Panc1 (cell line): ENCODE measurements at regions of chr15 and their contacts with region 1.

Region 1: GRCh38 chr15:67196672-67197363 is 57.6 kb downstream of the AAGAB start:
- DNase-seq: no peak
- ATAC-seq: peak; percentile 69
- H3K4me3 ChIP-seq: no peak overlapping the region
- H3K27ac ChIP-seq: peak overlapping the region; percentile 80
- H3K4me1 ChIP-seq: peaks cover 70% of the 10 kb centered on the region
- H3K27me3 ChIP-seq: no peaks in the 10 kb centered on the region
- CTCF ChIP-seq: no peak

Region 2: GRCh38 chr15:67134067-67134838 is 62.6 kb before region 1 on chr15:
- CTCF ChIA-PET with region 1: no interaction called
- POLR2A ChIA-PET with region 1: no interaction called
- in situ Hi-C with region 1: no loop called
- intact Hi-C with region 1: no loop called
- DNase-seq: no peak
- ATAC-seq: peak; percentile 37
- H3K4me3 ChIP-seq: peak overlapping the region in 1 of 2 experiments; percentile 14; a peak in 1 of 4 replicates
- H3K27ac ChIP-seq: peak overlapping the region; percentile 100
- H3K4me1 ChIP-seq: peaks cover 99% of the 10 kb centered on the region
- H3K27me3 ChIP-seq: no peaks in the 10 kb centered on the region
- CTCF ChIP-seq: no peak

Region 3: DNA sequence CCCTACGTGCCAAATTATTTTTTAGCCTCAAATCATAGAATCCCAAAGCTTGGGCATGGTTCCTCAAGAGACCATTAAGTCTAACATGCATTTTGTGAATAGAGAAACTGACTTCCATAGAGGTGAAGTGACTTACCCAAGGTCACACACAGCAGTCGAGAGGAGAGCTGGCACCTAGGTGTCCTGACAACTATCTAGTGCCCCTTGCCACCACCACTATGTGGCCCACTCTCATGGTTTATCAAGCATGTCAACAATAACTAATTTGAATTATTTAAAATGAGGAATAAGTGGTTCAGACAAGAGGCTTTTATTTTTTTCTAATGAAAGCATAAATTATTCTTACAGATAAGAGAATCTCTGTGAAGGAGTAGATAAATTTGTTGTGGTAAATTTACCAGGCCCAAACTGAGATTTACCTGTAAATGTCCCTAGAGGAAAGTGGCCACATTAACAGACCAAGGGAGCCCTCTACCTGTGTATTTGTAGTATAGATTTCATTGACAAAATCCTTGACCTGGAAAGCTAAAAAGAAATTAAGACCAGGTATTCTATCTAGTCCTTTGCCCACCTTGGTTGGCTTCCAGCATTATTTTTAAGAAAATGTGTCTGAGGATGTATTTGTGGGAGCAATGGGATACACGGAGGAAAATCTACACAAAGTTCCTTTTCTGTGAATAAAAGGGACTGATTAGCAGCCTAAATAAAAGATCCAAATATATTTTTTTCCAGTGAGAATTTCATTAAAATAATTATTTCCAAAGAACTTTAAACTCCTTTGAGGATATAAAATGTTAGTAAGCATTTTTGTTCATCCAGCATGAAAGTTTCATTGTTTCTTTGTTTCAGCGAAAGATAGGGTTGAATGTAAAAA is 106.9 kb after region 1 on chr15:
- CTCF ChIA-PET with region 1: no interaction called
- POLR2A ChIA-PET with region 1: no interaction called
- in situ Hi-C with region 1: no loop called
- intact Hi-C with region 1: loop called (anchors 10 kb)
- DNase-seq: peak; percentile 10
- ATAC-seq: peak; percentile 93
- H3K4me3 ChIP-seq: no peak overlapping the region
- H3K27ac ChIP-seq: peak overlapping the region; percentile 60; the same call in 1 of the 2 replicates
- H3K4me1 ChIP-seq: peaks cover 15% of the 10 kb centered on the region
- H3K27me3 ChIP-seq: no peaks in the 10 kb centered on the region
- CTCF ChIP-seq: peak; percentile 69

Region 4: DNA sequence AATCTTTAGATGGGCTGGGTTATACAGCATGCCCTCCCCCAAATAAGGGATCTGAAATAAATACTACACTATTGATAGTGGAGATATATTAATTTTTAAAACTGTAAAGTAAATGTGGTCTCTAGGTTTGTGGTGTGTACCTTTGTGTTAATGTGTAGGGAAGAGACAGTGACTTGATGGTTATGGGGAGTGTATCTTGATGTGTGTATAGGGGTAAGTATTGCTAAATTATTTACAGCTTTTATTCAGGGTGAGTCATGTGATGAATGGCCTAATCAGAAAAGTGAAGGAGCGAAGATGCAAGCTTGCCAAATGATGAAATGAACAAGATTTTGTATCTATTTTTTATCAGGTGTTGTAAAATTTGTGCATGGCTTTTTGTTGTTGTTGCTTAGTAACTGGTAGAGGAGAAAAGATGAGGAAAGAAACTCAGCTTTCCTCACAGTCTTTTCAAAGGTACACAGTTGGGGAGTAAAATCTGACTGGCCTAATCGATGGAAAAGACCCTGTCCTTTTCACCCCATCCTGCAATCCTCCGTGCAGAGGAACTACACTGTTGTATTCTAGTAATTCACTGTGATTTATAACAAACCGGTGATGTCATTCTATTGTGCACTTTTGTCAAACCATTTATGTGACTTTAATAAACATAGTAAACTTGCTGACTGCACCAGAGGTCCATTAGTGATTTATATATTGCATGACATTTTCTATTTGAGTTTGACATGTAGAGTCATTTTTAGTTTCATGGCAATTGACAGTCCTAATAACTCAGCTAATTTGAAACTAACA is 1098.4 kb after region 1 on chr15:
- CTCF ChIA-PET with region 1: no interaction called
- POLR2A ChIA-PET with region 1: interaction called, 14 read pairs
- in situ Hi-C with region 1: no loop called
- intact Hi-C with region 1: no loop called
- DNase-seq: no peak
- ATAC-seq: no peak
- H3K4me3 ChIP-seq: no peak overlapping the region
- H3K27ac ChIP-seq: no peak overlapping the region
- H3K4me1 ChIP-seq: no peaks in the 10 kb centered on the region
- H3K27me3 ChIP-seq: no peaks in the 10 kb centered on the region
- CTCF ChIP-seq: no peak